ENCODE measurements at regions of chr21 and their contacts with region 1.

Region 1: DNA sequence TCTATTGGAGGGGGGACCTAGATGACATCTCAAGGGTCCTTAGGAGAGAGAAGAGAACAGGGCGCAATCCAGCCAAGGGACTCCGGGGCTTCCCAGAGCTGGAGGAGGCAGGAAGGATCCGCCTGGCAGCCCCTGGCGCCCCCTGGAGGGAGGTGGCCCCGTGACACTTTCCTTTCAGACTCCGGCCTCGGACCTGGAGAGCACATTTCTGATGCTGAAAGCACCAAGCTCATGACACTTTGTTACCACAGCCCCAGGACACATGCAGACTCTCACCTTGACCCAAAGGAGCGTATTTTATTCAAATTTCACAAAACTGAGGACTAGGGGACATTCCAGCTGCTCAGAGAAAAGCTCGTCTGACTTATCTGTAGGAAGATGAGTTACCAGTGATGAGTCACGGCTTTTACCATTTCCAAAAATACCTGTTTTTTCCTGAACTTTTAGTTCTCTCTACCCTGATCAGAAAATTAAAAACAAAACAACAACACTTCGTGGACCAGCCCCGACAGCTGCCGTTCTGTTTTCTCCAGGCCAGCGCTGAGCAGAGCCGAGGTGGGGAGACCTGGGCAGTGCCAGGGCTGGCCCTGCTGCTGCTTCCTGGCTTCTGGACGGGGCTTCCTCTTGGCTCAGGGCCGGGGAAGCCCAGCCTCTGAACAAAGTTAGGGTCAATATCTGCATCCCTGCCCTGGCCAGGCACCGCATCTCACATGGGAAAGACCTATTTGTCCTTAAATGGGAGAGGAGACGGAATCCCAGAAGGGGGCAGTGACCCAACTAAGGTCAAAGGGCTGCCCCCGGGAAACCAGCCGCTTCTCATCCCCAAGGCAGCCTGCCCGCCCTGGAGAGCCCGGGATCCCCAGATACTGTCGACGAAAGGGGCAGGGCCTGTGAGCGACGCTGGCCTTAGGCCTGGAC is 21.6 kb upstream of the POFUT2 start:
- DNase-seq: no peak
- H3K4me3 ChIP-seq: no peak overlapping the region
- H3K27ac ChIP-seq: peak overlapping the region; percentile 34
- H3K4me1 ChIP-seq: peaks cover 28% of the 10 kb centered on the region
- H3K27me3 ChIP-seq: no peaks in the 10 kb centered on the region
- CTCF ChIP-seq: peak in 1 of 3 experiments; percentile 3
- POLR2A ChIP-seq: no peak

Region 2: GRCh38 chr21:45292399-45293219 is 16.7 kb before region 1 on chr21:
- intact Hi-C with region 1: loop called (anchors 2 kb)
- DNase-seq: peak; percentile 92 to 93
- H3K4me3 ChIP-seq: no peak overlapping the region
- H3K27ac ChIP-seq: peak overlapping the region; percentile 94
- H3K4me1 ChIP-seq: peaks cover 50% of the 10 kb centered on the region
- H3K27me3 ChIP-seq: no peaks in the 10 kb centered on the region
- CTCF ChIP-seq: peak; percentile 92 to 98 (median 93)
- POLR2A ChIP-seq: no peak

Region 3: DNA sequence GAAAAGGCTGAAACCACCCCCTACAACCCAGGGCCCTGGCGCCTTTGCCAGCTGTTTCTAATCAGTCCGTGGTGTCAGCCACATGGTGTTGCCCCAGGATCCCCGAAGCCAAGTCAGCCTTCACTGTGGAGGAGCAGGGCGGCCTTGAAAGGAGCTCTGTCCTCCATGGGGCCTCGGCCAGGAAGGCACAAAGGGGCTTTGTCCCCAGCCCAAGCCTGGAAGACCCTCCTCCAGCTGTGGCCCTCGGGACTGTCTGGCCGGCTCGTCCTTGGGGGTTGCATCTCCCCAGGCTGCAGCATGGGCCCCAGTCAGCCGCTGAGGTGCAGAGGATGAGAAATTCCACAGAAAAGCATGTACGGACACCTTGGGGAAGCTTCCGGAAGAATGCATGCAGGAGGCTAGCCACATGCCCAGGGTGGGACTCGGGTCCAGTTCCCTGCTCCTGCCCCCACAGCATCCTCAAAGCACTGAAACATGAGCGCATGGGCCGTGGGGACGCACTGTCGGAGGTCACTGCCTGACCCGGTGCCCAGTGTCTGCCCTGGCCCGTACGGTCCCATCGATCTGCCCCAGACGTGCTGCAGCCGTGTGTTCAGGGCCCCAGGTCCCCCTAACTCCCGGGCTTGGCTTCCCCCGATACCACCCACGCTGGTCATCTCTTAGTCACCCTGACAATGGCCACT is 17.0 kb after region 1 on chr21:
- intact Hi-C with region 1: no loop called
- DNase-seq: no peak
- H3K4me3 ChIP-seq: no peak overlapping the region
- H3K27ac ChIP-seq: no peak overlapping the region
- H3K4me1 ChIP-seq: peaks cover 54% of the 10 kb centered on the region
- H3K27me3 ChIP-seq: no peaks in the 10 kb centered on the region
- CTCF ChIP-seq: no peak
- POLR2A ChIP-seq: no peak

Region 4: DNA sequence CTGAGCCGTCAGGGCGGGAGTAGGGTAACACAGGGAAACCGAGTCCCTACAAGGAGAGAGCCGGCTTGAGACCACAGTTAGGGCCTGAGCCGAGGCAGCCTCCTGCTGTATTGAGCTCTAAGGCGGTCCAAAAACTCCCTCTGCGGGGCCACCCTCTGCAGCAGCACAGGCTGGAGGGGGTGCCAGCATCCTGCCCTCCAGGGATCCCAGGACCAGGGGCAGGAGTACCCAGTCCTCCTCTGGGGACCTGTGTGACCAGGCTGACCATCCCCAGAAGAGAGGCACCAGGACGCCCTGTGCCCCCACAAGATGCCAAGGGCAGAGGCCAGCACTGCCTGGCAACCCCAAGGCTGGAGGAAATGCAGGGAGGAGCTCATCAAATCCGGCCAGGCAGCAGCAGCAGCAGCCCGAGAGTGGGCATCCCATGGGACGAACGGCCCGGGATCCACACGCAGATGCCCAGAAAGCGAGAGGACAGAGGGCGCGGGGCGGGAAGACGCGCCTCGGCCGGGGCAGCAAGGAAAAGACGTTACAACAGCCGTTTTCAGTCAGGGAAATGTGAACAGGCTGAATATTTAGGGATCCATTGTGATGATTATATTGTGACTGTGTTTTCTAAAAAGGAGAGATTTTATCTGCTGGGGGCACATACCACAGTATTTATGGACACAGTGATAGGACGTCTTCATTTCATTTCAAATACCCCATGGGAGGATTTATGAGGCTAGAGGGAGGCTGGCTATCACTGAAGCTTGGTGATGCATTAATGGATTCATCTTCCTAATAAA is 38.6 kb after region 1 on chr21:
- intact Hi-C with region 1: loop called (anchors 5 kb)
- DNase-seq: no peak
- H3K4me3 ChIP-seq: no peak overlapping the region
- H3K27ac ChIP-seq: peak overlapping the region; percentile 73
- H3K4me1 ChIP-seq: peaks cover 52% of the 10 kb centered on the region
- H3K27me3 ChIP-seq: no peaks in the 10 kb centered on the region
- CTCF ChIP-seq: no peak
- POLR2A ChIP-seq: no peak

Measured in vagina (tissue), 2 donors.